OCI-LY7 (cell line): ENCODE measurements at regions of chr14 and their contacts with region 1.

Region 1: GRCh38 chr14:64232095-64232838 is 61.9 kb downstream of the ESR2 start:
- DNase-seq: peak; percentile 56
- H3K4me3 ChIP-seq: peak overlapping the region; percentile 78
- H3K27ac ChIP-seq: peak overlapping the region; percentile 98
- H3K4me1 ChIP-seq: peaks cover 56% of the 10 kb centered on the region
- CTCF ChIP-seq: no peak

Region 2: DNA sequence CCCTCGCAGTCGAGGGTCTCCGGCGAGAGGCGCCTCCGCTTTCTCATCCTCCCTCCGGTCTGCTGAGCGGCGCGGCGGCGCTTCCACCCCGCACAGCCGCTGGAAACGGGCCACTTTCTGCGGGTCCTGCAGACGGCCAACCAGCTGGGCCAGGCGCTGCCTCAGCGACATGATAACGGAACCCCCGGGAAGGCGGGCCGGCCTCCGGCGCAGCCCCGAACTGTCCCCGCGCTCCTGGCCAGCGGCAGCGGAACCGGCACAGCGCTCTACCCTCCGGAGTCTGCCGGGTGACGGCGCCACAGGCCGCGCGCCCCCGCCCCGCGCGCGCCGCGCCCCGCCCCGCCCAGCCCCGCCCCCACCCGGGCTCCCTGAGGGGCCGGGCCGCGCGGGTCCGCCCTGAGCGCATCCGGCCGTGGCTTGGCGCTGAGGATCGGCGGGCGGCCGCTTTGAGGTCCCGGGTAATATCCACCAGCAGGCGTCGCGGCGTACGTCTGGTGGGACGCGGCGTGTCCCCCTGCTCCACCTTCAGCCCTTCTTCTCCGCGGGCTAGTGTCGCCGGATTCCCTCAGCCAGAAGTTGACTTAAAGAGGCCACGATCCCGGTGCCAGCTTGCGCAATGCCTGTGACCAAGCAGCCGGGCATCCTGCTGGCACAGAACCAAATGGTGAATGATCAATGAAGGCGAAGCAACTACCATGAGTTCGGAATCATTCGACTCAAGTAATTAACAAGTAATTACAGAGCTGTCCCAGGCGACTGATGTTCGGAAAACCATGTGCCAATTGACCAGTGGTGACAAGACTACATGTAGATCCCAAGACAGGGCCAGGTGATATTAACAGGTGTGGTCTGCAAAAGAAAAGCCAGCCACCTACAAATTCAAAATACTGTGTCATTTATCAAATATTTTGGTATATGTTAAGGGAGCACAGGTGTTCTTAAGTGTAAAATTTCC is 504.2 kb before region 1 on chr14 and contains the start of gene SGPP1:
- CTCF ChIA-PET with region 1: no interaction called
- POLR2A ChIA-PET with region 1: interaction called, 3 read pairs
- intact Hi-C with region 1: loop called (anchors 5 kb)
- DNase-seq: peak; percentile 94
- H3K4me3 ChIP-seq: peak within 1 kb of the TSS; percentile 100
- H3K27ac ChIP-seq: peak within 1 kb of the TSS; percentile 91
- H3K4me1 ChIP-seq: peaks cover 28% of the 10 kb centered on the region
- CTCF ChIP-seq: peak; percentile 62
- total RNA-seq, gene SGPP1: 19.4 and 21.0 TPM in 2 replicates

Region 3: GRCh38 chr14:63867933-63868921 is 364.0 kb before region 1 on chr14:
- CTCF ChIA-PET with region 1: no interaction called
- POLR2A ChIA-PET with region 1: interaction called, 3 read pairs
- intact Hi-C with region 1: loop called (anchors 5 kb)
- DNase-seq: peak; percentile 84
- H3K4me3 ChIP-seq: peak overlapping the region; percentile 27
- H3K27ac ChIP-seq: peak overlapping the region; percentile 89
- H3K4me1 ChIP-seq: peaks cover 88% of the 10 kb centered on the region
- CTCF ChIP-seq: no peak

Region 4: GRCh38 chr14:64218344-64219240 is 13.7 kb before region 1 on chr14:
- CTCF ChIA-PET with region 1: no interaction called
- POLR2A ChIA-PET with region 1: interaction called, 13 read pairs
- intact Hi-C with region 1: no loop called
- DNase-seq: no peak
- H3K4me3 ChIP-seq: no peak overlapping the region
- H3K27ac ChIP-seq: peak overlapping the region; percentile 56
- H3K4me1 ChIP-seq: peaks cover 23% of the 10 kb centered on the region
- CTCF ChIP-seq: no peak

Region 5: DNA sequence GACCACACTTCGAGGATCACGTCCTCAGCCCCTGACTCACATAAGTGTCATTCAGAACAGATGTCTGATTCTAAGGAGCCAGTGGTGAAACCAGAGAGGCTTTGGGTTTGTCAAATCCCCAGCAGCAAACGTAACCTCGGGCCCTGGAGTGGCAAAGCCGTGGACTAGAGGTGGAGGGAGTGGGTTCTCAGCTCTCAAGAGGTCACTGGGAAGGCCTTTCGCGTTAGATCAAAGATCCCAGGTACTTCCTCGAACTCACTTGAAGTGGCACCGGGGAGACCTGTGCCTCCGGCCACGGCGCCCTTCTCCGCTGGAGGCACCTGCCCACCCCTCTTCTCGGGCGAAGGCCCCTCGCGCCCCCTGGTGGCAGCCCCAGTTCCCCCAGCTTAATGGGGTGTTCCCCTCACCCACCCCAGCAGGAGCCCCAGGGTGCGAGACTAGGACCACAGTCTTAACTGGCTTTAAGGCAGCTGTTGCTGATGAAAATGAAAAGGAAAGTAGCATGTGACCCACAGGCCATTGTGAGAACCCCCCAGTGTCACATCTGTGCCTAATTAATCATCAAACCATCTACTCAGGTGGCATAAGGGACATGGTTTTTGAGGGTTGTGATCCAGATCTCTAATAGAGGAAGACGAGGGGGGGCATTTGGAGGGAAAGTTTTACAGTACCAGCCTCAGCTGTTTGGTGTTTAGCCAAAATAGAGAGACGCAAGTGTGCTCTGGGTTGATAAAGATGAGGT is 62.6 kb after region 1 on chr14:
- CTCF ChIA-PET with region 1: interaction called, 9 read pairs
- POLR2A ChIA-PET with region 1: interaction called, 9 read pairs
- intact Hi-C with region 1: loop called (anchors 1 kb)
- DNase-seq: peak; percentile 90
- H3K4me3 ChIP-seq: peak overlapping the region; percentile 45
- H3K27ac ChIP-seq: no peak overlapping the region
- H3K4me1 ChIP-seq: peaks cover 28% of the 10 kb centered on the region
- CTCF ChIP-seq: peak; percentile 98

Region 6: DNA sequence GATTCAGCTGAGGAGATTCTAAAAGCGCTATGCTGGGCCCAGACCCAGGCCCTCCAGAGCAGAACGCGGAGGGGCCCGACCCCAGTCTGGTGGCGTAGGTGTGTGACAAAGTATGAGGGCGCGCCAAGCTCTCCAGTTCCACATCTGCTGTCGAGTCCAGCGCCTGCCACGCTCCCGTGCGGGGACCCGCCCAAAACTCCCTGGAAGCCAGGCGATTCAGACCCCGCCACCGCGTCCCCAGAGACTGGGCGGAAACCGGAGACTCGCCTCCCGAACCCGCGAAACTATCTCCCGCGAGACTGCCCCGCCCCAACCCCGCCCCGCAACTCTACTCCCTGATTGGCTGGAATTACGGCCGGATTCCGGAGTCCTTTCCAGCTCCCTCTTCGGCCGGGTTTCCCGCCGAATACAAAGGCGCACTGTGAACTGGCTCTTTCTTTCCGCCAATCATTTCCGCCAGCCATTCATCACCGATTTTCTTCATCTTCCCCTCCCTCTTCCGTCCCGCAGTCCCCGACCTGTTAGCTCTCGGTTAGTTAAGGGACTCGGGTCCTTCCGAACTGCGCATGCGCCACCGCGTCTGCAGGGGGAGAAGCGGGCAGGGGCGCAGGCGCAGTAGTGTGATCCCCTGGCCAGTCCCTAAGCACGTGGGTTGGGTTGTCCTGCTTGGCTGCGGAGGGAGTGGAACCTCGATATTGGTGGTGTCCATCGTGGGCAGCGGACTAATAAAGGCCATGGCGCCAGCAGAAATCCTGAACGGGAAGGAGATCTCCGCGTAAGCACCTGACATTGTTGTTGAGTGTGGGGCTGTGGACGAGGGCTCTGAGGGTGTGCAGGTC is 155.6 kb after region 1 on chr14 and contains the start of gene MTHFD1:
- CTCF ChIA-PET with region 1: no interaction called
- POLR2A ChIA-PET with region 1: no interaction called
- intact Hi-C with region 1: loop called (anchors 5 kb)
- DNase-seq: peak; percentile 98
- H3K4me3 ChIP-seq: peak within 1 kb of the TSS; percentile 85
- H3K27ac ChIP-seq: peak within 1 kb of the TSS; percentile 78
- H3K4me1 ChIP-seq: peaks cover 26% of the 10 kb centered on the region
- CTCF ChIP-seq: no peak
- total RNA-seq, gene MTHFD1: 73.7 and 100 TPM in 2 replicates

Region 7: GRCh38 chr14:65302571-65303189 is 1070.4 kb after region 1 on chr14:
- CTCF ChIA-PET with region 1: no interaction called
- POLR2A ChIA-PET with region 1: no interaction called
- intact Hi-C with region 1: loop called (anchors 10 kb)
- DNase-seq: peak; percentile 82
- H3K4me3 ChIP-seq: peak overlapping the region; percentile 61
- H3K27ac ChIP-seq: peak overlapping the region; percentile 99
- H3K4me1 ChIP-seq: peaks cover 98% of the 10 kb centered on the region
- CTCF ChIP-seq: no peak